B cell (primary cell): ENCODE measurements at regions of chr20 and their contacts with region 1.

Region 1: DNA sequence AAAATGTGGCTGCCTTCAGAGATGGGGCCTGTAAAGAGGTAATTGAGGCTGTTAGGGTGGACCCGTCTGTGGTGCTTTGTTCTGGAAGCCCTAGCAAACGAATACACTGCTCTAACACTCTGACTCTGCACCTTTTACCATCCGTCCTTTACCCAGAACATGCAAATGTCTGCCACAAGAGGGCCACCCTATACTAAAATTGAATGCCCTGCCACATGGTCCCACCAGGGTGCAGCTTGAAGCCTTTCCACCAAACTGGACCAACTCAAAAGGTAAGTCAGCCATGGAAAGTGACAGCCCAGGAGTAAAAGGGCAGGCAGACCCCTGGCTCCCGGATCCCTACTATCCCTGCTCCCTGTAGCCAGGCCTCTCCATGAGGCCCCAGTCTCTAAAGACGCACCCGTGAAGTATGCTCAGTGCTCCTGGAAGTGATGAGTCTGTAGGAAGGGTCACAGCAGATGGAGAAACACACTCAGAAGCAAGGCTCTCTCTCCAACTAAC is 5.8 kb upstream of the BFSP1 start:
- DNase-seq: peak; percentile 78
- ATAC-seq: peak; percentile 90
- H3K4me3 ChIP-seq: no peak overlapping the region
- H3K4me3 Mint-ChIP-seq: no peak overlapping the region
- H3K27ac ChIP-seq: no peak overlapping the region
- H3K27ac Mint-ChIP-seq: no peak overlapping the region
- H3K4me1 ChIP-seq: no peaks in the 10 kb centered on the region
- H3K4me1 Mint-ChIP-seq: no peaks in the 10 kb centered on the region
- H3K27me3 ChIP-seq: peaks cover 0 to 15% (median 2%) of the 10 kb centered on the region in 4 experiments
- H3K27me3 Mint-ChIP-seq: peaks cover 39% of the 10 kb centered on the region
- CTCF ChIP-seq: peak; percentile 87

Region 2: DNA sequence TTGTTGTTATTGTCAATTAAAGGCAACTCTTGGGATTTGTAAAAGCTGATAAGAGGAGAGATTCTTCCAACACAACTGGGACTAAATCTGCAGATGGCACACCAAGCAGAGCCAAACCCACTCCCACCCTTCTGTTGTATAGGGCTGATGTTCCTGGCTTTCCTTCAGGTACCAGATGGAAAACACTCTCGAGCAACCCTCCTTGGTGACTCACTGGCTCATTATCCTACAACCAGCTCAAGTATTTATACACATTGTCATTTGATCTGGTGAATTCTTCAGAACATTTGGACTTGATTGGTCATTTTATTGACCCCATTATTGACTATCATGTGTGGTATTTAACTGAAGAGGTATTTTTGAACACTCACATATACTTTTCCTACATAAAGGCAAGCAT is 500.5 kb before region 1 on chr20:
- CTCF ChIA-PET with region 1: no interaction called
- POLR2A ChIA-PET with region 1: no interaction called
- intact Hi-C with region 1: no loop called
- DNase-seq: no peak
- ATAC-seq: no peak
- H3K4me3 ChIP-seq: no peak overlapping the region
- H3K4me3 Mint-ChIP-seq: no peak overlapping the region
- H3K27ac ChIP-seq: no peak overlapping the region
- H3K27ac Mint-ChIP-seq: no peak overlapping the region
- H3K4me1 ChIP-seq: no peaks in the 10 kb centered on the region
- H3K4me1 Mint-ChIP-seq: no peaks in the 10 kb centered on the region
- H3K27me3 ChIP-seq: no peaks in the 10 kb centered on the region
- H3K27me3 Mint-ChIP-seq: peaks cover 3% of the 10 kb centered on the region
- CTCF ChIP-seq: no peak

Region 3: GRCh38 chr20:17504898-17505635 is 31.9 kb before region 1 on chr20:
- CTCF ChIA-PET with region 1: interaction called, 8 read pairs
- POLR2A ChIA-PET with region 1: no interaction called
- intact Hi-C with region 1: loop called (anchors 1 kb)
- DNase-seq: peak; percentile 83
- ATAC-seq: peak; percentile 84
- H3K4me3 ChIP-seq: peak overlapping the region; percentile 47 to 81 (median 59)
- H3K4me3 Mint-ChIP-seq: peak overlapping the region; percentile 94
- H3K27ac ChIP-seq: peak overlapping the region; percentile 20 to 51
- H3K27ac Mint-ChIP-seq: peak overlapping the region; percentile 60
- H3K4me1 ChIP-seq: peaks cover 9 to 17% of the 10 kb centered on the region in 2 donors
- H3K4me1 Mint-ChIP-seq: peaks cover 13% of the 10 kb centered on the region
- H3K27me3 ChIP-seq: no peaks in the 10 kb centered on the region
- H3K27me3 Mint-ChIP-seq: peaks cover 7% of the 10 kb centered on the region
- CTCF ChIP-seq: peak; percentile 80

Region 4: GRCh38 chr20:17617551-17618223 is 80.7 kb after region 1 on chr20:
- CTCF ChIA-PET with region 1: interaction called, 19 read pairs
- POLR2A ChIA-PET with region 1: no interaction called
- intact Hi-C with region 1: no loop called
- DNase-seq: peak; percentile 44
- ATAC-seq: peak; percentile 67
- H3K4me3 ChIP-seq: no peak overlapping the region
- H3K4me3 Mint-ChIP-seq: no peak overlapping the region
- H3K27ac ChIP-seq: no peak overlapping the region
- H3K27ac Mint-ChIP-seq: no peak overlapping the region
- H3K4me1 ChIP-seq: peaks cover 3 to 12% of the 10 kb centered on the region in 2 donors
- H3K4me1 Mint-ChIP-seq: peaks cover 3% of the 10 kb centered on the region
- H3K27me3 ChIP-seq: no peaks in the 10 kb centered on the region
- H3K27me3 Mint-ChIP-seq: no peaks in the 10 kb centered on the region
- CTCF ChIP-seq: peak; percentile 52

Region 5: GRCh38 chr20:17898548-17898994 is 361.6 kb after region 1 on chr20:
- CTCF ChIA-PET with region 1: interaction called, 13 read pairs
- POLR2A ChIA-PET with region 1: no interaction called
- intact Hi-C with region 1: loop called (anchors 1 kb)
- DNase-seq: peak; percentile 78
- ATAC-seq: peak; percentile 80
- H3K4me3 ChIP-seq: no peak overlapping the region
- H3K4me3 Mint-ChIP-seq: no peak overlapping the region
- H3K27ac ChIP-seq: no peak overlapping the region
- H3K27ac Mint-ChIP-seq: peak overlapping the region; percentile 0
- H3K4me1 ChIP-seq: peaks cover 47 to 48% of the 10 kb centered on the region in 2 donors
- H3K4me1 Mint-ChIP-seq: peaks cover 46% of the 10 kb centered on the region
- H3K27me3 ChIP-seq: peaks cover 0 to 4% (median 2%) of the 10 kb centered on the region in 4 experiments
- H3K27me3 Mint-ChIP-seq: peaks cover 21% of the 10 kb centered on the region
- CTCF ChIP-seq: peak; percentile 98

Region 6: GRCh38 chr20:17995967-17996819 is 459.2 kb after region 1 on chr20:
- CTCF ChIA-PET with region 1: interaction called, 36 read pairs
- POLR2A ChIA-PET with region 1: no interaction called
- intact Hi-C with region 1: loop called (anchors 1 kb)
- DNase-seq: peak; percentile 79
- ATAC-seq: peak; percentile 94
- H3K4me3 ChIP-seq: no peak overlapping the region
- H3K4me3 Mint-ChIP-seq: no peak overlapping the region
- H3K27ac ChIP-seq: no peak overlapping the region
- H3K27ac Mint-ChIP-seq: peak overlapping the region; percentile 54
- H3K4me1 ChIP-seq: peaks cover 16% of the 10 kb centered on the region in 2 donors
- H3K4me1 Mint-ChIP-seq: peaks cover 22% of the 10 kb centered on the region
- H3K27me3 ChIP-seq: no peaks in the 10 kb centered on the region
- H3K27me3 Mint-ChIP-seq: peaks cover 3% of the 10 kb centered on the region
- CTCF ChIP-seq: peak; percentile 99

Region 7: DNA sequence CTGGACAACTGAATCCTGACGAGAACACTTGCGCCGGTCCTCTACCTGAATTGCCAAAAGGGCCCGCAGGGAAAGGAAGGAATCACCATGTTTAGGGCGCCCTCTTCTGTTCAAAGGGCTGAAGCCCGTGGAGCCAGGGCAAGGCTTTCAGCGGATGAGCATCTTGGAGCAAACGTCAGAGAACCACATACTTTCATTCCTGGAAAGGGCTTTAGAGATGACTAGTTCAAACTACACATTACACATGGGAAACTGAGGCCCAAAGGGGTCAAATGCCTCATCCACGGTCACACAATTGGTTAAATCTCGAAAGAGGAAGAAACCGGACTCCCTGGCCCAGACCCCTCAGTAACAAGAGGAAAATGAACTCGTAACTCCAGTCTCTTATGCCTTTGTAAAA is 739.8 kb after region 1 on chr20:
- CTCF ChIA-PET with region 1: interaction called, 3 read pairs
- POLR2A ChIA-PET with region 1: no interaction called
- intact Hi-C with region 1: loop called (anchors 1 kb)
- DNase-seq: peak; percentile 68
- ATAC-seq: peak; percentile 49
- H3K4me3 ChIP-seq: no peak overlapping the region
- H3K4me3 Mint-ChIP-seq: no peak overlapping the region
- H3K27ac ChIP-seq: no peak overlapping the region
- H3K27ac Mint-ChIP-seq: no peak overlapping the region
- H3K4me1 ChIP-seq: peaks cover 0 to 4% of the 10 kb centered on the region in 2 donors
- H3K4me1 Mint-ChIP-seq: no peaks in the 10 kb centered on the region
- H3K27me3 ChIP-seq: peaks cover 0 to 30% (median 17%) of the 10 kb centered on the region in 4 experiments
- H3K27me3 Mint-ChIP-seq: peaks cover 31% of the 10 kb centered on the region
- CTCF ChIP-seq: peak; percentile 71